Vagina (tissue), 2 donors: ENCODE measurements at regions of chr15 and their contacts with region 1.

Region 1: DNA sequence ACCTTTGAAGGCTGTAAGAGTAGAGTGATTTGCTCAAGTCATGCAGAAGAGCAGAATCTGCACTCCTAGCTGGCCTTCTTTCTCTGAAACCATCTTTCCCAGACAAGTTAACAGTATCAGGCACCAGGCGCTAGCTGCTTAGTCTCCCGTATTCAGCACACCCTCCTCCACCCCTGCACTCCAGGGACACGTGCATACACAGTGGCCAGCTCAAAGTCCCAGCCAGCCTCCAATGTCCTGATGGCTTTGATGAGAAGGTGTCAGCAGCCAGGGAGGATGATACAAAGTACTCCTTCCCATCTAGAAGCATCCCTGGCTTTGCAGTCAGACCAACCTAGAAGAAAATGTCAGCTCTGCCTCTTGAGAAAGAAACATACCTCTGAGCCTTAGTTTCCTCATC is 177.8 kb downstream of the ADAMTS17 start:
- DNase-seq: no peak
- H3K4me3 ChIP-seq: no peak overlapping the region
- H3K27ac ChIP-seq: no peak overlapping the region
- H3K4me1 ChIP-seq: no peaks in the 10 kb centered on the region
- H3K27me3 ChIP-seq: no peaks in the 10 kb centered on the region
- CTCF ChIP-seq: no peak
- POLR2A ChIP-seq: no peak

Region 2: DNA sequence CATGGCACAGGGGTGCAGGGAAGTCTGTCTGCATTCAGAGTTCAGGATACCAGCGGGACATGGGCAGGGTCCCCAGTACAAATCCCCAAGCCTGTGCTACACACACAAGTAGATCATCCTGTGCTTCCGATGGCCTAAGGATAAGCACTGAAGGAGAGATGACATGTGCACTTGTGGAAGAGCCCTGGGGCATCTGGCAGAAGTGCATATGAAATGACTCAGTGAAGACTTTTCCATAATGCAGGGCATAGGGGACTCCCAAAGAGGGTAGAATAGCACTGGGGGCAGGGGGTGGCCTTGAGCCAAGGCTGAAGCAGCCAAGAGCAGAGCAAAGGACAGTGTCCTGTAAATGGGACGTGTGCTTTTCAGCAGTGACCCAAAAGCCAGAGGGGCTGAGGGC is 154.9 kb after region 1 on chr15:
- intact Hi-C with region 1: loop called (anchors 2 kb)
- DNase-seq: no peak
- H3K4me3 ChIP-seq: no peak overlapping the region
- H3K27ac ChIP-seq: no peak overlapping the region
- H3K4me1 ChIP-seq: no peaks in the 10 kb centered on the region
- H3K27me3 ChIP-seq: no peaks in the 10 kb centered on the region
- CTCF ChIP-seq: no peak
- POLR2A ChIP-seq: no peak